Esophagus squamous epithelium (tissue), 5 donors: ENCODE measurements at regions of chr1 and their contacts with region 1.

Region 1: GRCh38 chr1:152459596-152460528 is 45.8 kb upstream of the CRNN start:
- DNase-seq: no peak
- H3K4me3 ChIP-seq: peak overlapping the region in 1 of 4 donors; percentile 17
- H3K27ac ChIP-seq: peak overlapping the region in 3 of 4 donors; percentile 30 to 64 (median 42)
- H3K4me1 ChIP-seq: peaks cover 0 to 29% (median 4%) of the 10 kb centered on the region in 3 donors
- H3K27me3 ChIP-seq: no peaks in the 10 kb centered on the region
- CTCF ChIP-seq: peak; percentile 63 to 85 (median 73)
- POLR2A ChIP-seq: no peak

Region 2: GRCh38 chr1:152052606-152053005 is 407.3 kb before region 1 on chr1:
- intact Hi-C with region 1: loop called (anchors 10 kb)
- DNase-seq: peak; percentile 37
- H3K4me3 ChIP-seq: no peak overlapping the region
- H3K27ac ChIP-seq: peak overlapping the region in 3 of 4 donors; percentile 98 to 99 (median 99)
- H3K4me1 ChIP-seq: peaks cover 17 to 52% (median 36%) of the 10 kb centered on the region in 3 donors
- H3K27me3 ChIP-seq: peaks cover 0 to 25% (median 0%) of the 10 kb centered on the region in 4 donors
- CTCF ChIP-seq: peak; percentile 76 to 97 (median 93)
- POLR2A ChIP-seq: no peak

Region 3: DNA sequence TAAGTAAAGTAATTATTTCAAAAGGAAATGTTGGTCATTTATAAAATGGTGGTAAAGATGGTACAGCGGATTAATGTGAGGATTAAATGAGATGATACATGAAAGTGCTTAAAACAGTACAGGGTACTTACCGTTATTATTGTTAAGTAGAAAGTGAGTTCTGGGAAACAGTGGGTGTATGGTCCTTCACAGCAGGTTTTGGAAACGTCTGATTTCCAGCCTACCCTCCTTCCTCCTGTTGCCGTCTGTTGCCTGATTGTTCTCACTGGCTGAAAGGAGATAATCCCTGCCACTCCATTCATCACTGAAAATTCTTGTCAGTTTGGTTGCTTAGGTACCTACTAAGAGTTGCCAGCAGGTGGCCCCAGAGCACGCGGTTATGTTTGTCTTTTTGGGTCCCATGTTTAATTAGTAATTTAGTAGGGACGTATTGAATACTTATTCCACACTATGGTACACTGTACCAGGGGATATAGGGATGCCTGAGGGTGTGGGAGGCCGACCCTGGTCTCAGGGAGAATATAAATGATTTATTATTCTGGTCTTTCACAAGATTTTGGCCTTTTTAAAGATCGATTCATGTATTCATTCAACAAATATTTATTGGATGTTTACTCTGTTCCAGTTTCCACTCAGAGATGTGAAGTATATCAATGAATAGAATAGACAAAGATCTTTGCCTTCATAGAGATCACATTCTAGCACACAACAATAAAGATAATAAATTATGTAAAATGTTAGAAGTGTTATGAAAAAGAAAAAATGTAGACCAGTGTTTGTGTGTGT is 270.0 kb before region 1 on chr1:
- intact Hi-C with region 1: loop called (anchors 10 kb)
- DNase-seq: no peak
- H3K4me3 ChIP-seq: peak overlapping the region in 3 of 4 donors; percentile 48 to 59 (median 51)
- H3K27ac ChIP-seq: peak overlapping the region; percentile 27 to 84 (median 56)
- H3K4me1 ChIP-seq: peaks cover 19 to 77% (median 28%) of the 10 kb centered on the region in 3 donors
- H3K27me3 ChIP-seq: peaks cover 0 to 6% (median 0%) of the 10 kb centered on the region in 4 donors
- CTCF ChIP-seq: peak; percentile 56 to 88 (median 79)
- POLR2A ChIP-seq: no peak

Region 4: GRCh38 chr1:152252157-152252556 is 207.7 kb before region 1 on chr1:
- intact Hi-C with region 1: no loop called
- DNase-seq: no peak
- H3K4me3 ChIP-seq: no peak overlapping the region
- H3K27ac ChIP-seq: peak overlapping the region in 3 of 4 donors; percentile 35 to 45 (median 36)
- H3K4me1 ChIP-seq: peaks cover 0 to 39% (median 8%) of the 10 kb centered on the region in 3 donors
- H3K27me3 ChIP-seq: no peaks in the 10 kb centered on the region
- CTCF ChIP-seq: no peak
- POLR2A ChIP-seq: no peak